Mammary epithelial cell (primary cell): ENCODE measurements at regions of chr11 and their contacts with region 1.

Region 1: DNA sequence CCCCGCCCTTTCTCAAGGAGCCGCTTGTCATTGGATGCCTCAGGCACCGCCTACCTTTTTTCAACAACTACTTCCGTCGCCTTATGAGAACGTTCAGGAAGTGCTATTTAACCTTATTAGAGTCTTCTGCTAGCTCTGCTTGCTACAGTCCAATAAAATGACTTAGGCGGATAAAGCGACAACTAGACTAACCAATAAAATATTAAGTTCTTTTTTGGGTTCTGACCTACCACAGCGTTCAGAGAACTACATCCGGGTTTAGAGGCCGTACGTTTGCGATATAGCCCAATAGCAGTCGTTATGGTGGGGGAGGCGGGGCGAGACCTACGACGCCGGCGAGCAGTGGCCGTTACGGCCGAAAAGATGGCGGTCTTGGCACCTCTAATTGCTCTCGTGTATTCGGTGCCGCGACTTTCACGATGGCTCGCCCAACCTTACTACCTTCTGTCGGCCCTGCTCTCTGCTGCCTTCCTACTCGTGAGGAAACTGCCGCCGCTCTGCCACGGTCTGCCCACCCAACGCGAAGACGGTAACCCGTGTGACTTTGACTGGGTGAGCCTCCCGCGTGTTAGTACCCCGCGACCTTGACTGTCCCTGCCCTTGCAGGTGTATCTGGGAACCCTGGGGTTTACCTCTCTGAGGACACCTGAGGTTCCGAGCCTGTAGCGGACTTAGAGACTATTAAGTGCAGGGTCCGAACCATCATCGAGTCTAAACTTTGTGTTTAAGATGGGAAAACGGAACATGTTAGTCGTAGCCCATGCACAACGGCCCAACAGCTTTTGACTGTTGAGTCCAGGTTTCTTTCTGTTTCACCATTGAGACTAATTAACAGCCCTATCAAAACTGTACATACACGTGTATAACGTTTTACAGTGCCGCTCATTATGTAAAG is at the start of gene TMX2:
- DNase-seq: peak; percentile 99
- H3K4me3 ChIP-seq: peak within 1 kb of the TSS; percentile 61 to 97 (median 86)
- H3K27ac ChIP-seq: peak within 1 kb of the TSS; percentile 74
- H3K4me1 ChIP-seq: peaks cover 14% of the 10 kb centered on the region
- H3K27me3 ChIP-seq: no peaks in the 10 kb centered on the region
- CTCF ChIP-seq: no peak
- total RNA-seq, gene TMX2: 54.0 to 95.8 TPM

Region 2: DNA sequence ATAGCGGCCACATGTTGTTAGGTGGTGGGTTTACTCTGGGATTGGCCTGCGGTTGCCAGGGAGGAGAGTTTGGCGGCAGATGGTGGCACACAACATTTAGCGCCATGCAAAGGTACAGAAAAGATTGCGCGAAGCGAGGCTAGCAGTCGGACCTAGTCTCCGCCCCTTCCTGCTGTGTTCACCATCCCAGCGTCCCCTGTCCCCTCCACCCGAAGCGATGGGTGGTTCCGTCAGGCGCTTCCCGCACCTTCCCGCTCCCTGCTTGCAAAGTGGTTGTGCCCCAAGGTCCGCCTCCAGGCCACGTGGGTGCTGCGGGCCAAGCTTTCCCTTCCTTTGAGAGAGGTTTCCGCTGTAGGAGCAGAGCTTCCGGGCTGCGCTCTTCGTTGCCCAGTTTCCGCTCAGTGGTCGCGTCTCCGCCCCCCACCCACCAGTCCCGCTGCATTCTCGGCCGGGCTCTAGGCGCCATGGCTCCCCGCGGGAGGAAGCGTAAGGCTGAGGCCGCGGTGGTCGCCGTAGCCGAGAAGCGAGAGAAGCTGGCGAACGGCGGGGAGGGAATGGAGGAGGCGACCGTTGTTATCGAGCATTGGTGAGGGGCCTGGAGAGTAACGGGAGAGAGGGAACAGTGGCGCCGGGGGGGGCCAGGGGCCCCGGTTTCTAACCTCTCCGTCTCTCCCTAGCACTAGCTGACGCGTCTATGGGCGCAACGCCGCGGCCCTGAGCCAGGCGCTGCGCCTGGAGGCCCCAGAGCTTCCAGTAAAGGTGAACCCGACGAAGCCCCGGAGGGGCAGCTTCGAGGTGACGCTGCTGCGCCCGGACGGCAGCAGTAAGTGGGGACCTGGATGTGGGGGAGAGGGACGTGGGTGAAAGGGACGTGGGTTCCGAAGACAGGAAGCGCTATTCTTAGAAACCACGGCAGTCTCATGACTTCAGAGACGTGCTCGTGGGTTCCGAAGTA is 28.9 kb after region 1 on chr11 and contains the start of gene SELENOH:
- CTCF ChIA-PET with region 1: no interaction called
- dilution Hi-C with region 1: no loop called
- in situ Hi-C with region 1: no loop called
- intact Hi-C with region 1: loop called (anchors 1 kb)
- DNase-seq: peak; percentile 95
- H3K4me3 ChIP-seq: peak within 1 kb of the TSS; percentile 67 to 99 (median 81)
- H3K27ac ChIP-seq: peak within 1 kb of the TSS; percentile 65
- H3K4me1 ChIP-seq: peaks cover 6% of the 10 kb centered on the region
- H3K27me3 ChIP-seq: no peaks in the 10 kb centered on the region
- CTCF ChIP-seq: no peak
- total RNA-seq, gene SELENOH: 63.5 to 115 TPM